ENCODE measurements at regions of chr17 and their contacts with region 1.

Region 1: GRCh38 chr17:19867064-19867313 is 747 bp downstream of the ULK2 start:
- DNase-seq: peak; percentile 60
- ATAC-seq: peak; percentile 79
- H3K4me3 ChIP-seq: peak overlapping the region; percentile 77
- H3K27ac ChIP-seq: no peak overlapping the region
- H3K4me1 ChIP-seq: peaks cover 6% of the 10 kb centered on the region; the same call in 1 of the 2 replicates
- H3K27me3 ChIP-seq: no peaks in the 10 kb centered on the region
- CTCF ChIP-seq: peak; percentile 35

Region 2: DNA sequence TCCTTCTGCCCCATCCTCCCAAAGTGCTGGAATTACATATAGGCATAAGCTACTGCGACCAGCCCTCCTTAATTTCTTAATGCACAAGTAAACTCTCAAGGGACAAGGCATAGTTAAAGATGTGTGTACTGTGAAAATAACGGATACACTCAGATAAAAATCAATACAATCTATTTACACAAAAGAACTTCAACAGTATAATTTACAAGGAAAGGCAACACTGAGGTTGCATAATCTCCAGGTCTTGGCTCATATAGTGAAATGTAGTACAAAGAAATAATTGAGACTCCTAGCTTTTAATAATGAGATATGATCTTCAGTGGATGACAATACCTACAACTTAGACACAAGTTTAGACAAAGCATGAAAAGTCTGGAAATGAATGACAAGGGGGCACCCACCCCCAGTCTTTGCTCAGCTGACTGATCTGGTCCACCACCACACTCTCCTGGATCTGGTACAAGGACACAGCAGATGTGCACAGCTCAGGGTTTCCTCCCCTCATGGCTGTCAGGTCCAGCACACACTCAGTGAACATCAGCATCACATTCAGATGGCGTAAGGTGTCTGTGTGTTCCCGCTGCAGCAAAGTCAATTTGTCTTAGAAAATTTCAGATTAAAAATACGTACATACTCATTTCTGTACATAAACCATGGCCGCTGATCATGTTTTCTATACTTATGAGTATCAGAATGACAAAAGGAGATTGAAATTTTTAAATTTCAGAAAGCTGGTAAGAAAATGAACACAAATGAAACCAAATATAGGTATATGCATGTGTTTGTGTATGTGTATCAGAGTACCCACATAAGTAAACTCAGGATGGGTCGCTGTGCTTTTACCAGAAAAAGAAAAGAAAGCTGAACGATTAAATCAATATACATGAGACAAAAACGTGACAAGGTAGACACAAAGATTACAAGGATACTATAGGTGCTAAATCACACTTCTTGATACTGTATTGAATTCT is 85.2 kb before region 1 on chr17:
- CTCF ChIA-PET with region 1: no interaction called
- POLR2A ChIA-PET with region 1: no interaction called
- intact Hi-C with region 1: no loop called
- DNase-seq: peak; percentile 25
- ATAC-seq: peak; percentile 87
- H3K4me3 ChIP-seq: no peak overlapping the region
- H3K27ac ChIP-seq: no peak overlapping the region
- H3K4me1 ChIP-seq: no peaks in the 10 kb centered on the region
- H3K27me3 ChIP-seq: no peaks in the 10 kb centered on the region
- CTCF ChIP-seq: no peak

Region 3: GRCh38 chr17:19904924-19905323 is 37.9 kb after region 1 on chr17:
- CTCF ChIA-PET with region 1: no interaction called
- POLR2A ChIA-PET with region 1: no interaction called
- intact Hi-C with region 1: loop called (anchors 5 kb)
- DNase-seq: no peak
- ATAC-seq: no peak
- H3K4me3 ChIP-seq: no peak overlapping the region
- H3K27ac ChIP-seq: no peak overlapping the region
- H3K4me1 ChIP-seq: peaks cover 24% of the 10 kb centered on the region
- H3K27me3 ChIP-seq: no peaks in the 10 kb centered on the region
- CTCF ChIP-seq: no peak

Region 4: DNA sequence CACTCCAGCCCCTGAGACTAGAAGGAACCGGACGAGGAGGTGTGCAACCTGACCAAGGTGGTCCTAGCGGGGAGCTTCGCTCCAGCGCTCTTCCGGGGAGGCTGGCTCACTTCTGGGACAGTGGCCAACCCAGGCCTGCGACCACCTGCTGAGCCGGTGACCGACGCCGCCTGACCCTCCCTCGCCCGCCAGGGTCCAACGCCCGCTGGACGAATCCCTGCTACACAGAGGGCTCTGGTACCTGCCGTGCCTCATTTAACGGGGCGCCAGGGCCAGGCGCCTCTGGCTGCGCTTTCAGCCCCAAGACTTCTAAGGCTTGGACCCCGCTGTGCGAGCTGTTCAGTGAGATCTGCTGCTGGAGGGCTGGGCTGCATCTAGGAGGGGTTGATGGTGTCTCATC is 1725.8 kb after region 1 on chr17:
- CTCF ChIA-PET with region 1: no interaction called
- POLR2A ChIA-PET with region 1: no interaction called
- intact Hi-C with region 1: no loop called
- DNase-seq: no peak
- ATAC-seq: no peak
- H3K4me3 ChIP-seq: no peak overlapping the region
- H3K27ac ChIP-seq: no peak overlapping the region
- H3K4me1 ChIP-seq: no peaks in the 10 kb centered on the region
- H3K27me3 ChIP-seq: peaks cover 14% of the 10 kb centered on the region; the same call in 1 of the 2 replicates
- CTCF ChIP-seq: no peak

Measured in PC-3 (cell line).